Heart left ventricle (tissue), 16 donors: ENCODE measurements at regions of chr20 and their contacts with region 1.

Region 1: GRCh38 chr20:39874049-39874888 is 814.8 kb downstream of the MAFB start:
- DNase-seq: peak; percentile 73 to 84 (median 79)
- ATAC-seq: peak; percentile 90 to 98 (median 93)
- H3K4me3 ChIP-seq: no peak overlapping the region
- H3K27ac ChIP-seq: peak overlapping the region in 1 of 12 donors; percentile 36
- H3K4me1 ChIP-seq: peaks cover 0 to 14% (median 0%) of the 10 kb centered on the region in 12 donors
- H3K27me3 ChIP-seq: peaks cover 0 to 19% (median 0%) of the 10 kb centered on the region in 9 donors
- CTCF ChIP-seq: peak; percentile 67 to 92 (median 84)
- POLR2A ChIP-seq: no peak

Region 2: DNA sequence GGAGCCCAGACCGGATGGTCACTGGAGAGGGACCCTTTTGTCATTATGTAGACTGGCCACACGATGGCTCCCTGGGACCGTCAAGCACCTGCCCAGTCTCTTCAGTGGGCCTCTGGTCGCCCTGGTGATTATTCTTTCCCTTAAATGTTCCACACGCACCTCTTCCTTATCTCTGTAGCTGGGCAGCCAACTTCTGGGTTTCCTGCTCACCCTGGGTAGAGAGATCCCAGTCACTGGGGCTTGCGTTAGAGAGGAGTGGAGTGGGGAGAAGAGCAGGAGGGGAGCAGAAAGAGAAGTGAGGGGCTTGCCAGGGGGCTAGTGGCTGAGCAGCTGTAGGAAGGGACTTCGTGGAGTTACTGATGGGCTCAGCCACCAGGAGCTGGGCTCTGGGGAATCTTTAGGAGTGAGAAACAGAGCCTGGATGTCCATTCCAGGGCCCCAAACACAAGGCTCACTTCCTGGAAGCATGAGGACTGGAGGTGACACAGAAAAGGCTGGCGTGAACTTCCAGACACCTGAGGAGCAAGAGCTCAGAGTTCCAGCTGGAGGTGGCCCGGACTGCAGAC is 762.0 kb before region 1 on chr20:
- intact Hi-C with region 1: loop called in 4 of 10 experiments (anchors 5 kb)
- DNase-seq: peak in 4 of 5 donors; percentile 30 to 51 (median 39)
- ATAC-seq: peak; percentile 73 to 89 (median 84)
- H3K4me3 ChIP-seq: no peak overlapping the region
- H3K27ac ChIP-seq: no peak overlapping the region
- H3K4me1 ChIP-seq: peaks cover 0 to 5% (median 1%) of the 10 kb centered on the region in 12 donors
- H3K27me3 ChIP-seq: peaks cover 0 to 35% (median 14%) of the 10 kb centered on the region in 9 donors
- CTCF ChIP-seq: peak; percentile 43 to 71 (median 63)
- POLR2A ChIP-seq: no peak

Region 3: GRCh38 chr20:39588148-39588757 is 286.0 kb before region 1 on chr20:
- intact Hi-C with region 1: loop called in 1 of 10 experiments (anchors 10 kb)
- DNase-seq: no peak
- ATAC-seq: peak in 3 of 4 donors; percentile 24 to 75 (median 55)
- H3K4me3 ChIP-seq: no peak overlapping the region
- H3K27ac ChIP-seq: no peak overlapping the region
- H3K4me1 ChIP-seq: peaks cover 0 to 6% (median 0%) of the 10 kb centered on the region in 12 donors
- H3K27me3 ChIP-seq: peaks cover 0 to 16% (median 0%) of the 10 kb centered on the region in 9 donors
- CTCF ChIP-seq: no peak
- POLR2A ChIP-seq: no peak

Region 4: DNA sequence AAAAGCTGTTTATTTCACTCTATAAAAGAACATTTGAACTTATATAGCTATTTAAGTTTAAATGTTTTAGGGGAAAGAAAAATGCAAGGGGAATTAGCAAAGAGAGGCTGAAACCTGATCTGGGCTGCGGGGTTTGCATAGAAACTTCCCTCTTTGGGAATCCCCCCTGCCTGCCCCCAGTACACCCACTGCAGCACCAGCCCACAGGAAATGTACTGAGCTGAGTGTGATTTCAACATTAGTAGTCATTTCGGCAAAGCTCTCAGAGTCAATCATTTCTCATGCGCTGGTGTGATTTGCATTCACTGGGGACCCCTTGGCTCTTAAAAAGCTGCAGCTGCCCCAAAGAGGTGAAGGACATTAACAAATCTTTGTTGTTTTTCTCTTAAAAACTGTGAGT is 44.6 kb before region 1 on chr20:
- intact Hi-C with region 1: loop called in 1 of 10 experiments (anchors 5 kb)
- DNase-seq: no peak
- ATAC-seq: no peak
- H3K4me3 ChIP-seq: no peak overlapping the region
- H3K27ac ChIP-seq: no peak overlapping the region
- H3K4me1 ChIP-seq: peaks cover 0 to 8% (median 0%) of the 10 kb centered on the region in 12 donors
- H3K27me3 ChIP-seq: peaks cover 0 to 4% (median 0%) of the 10 kb centered on the region in 9 donors
- CTCF ChIP-seq: no peak
- POLR2A ChIP-seq: no peak